Posterior vena cava (tissue), 2 donors: ENCODE measurements at regions of chr2 and their contacts with region 1.

Region 1: GRCh38 chr2:237361194-237361986 is 52.6 kb downstream of the COL6A3 start:
- DNase-seq: no peak

Region 2: GRCh38 chr2:237397072-237397471 is 35.7 kb after region 1 on chr2:
- intact Hi-C with region 1: loop called in 1 of 2 experiments (anchors 5 kb)
- DNase-seq: no peak